ENCODE measurements at regions of chr1 and their contacts with region 1.

Region 1: GRCh38 chr1:38474738-38475623 is 384.6 kb downstream of the RRAGC start:
- DNase-seq: peak; percentile 88
- ATAC-seq: peak; percentile 80
- H3K4me3 ChIP-seq: peak overlapping the region; percentile 51 to 74 (median 62)
- H3K4me3 Mint-ChIP-seq: peak overlapping the region; percentile 94
- H3K27ac ChIP-seq: peak overlapping the region; percentile 90 to 96
- H3K27ac Mint-ChIP-seq: peak overlapping the region; percentile 99
- H3K4me1 ChIP-seq: peaks cover 34 to 49% of the 10 kb centered on the region in 2 donors
- H3K4me1 Mint-ChIP-seq: peaks cover 69% of the 10 kb centered on the region
- H3K27me3 ChIP-seq: no peaks in the 10 kb centered on the region
- H3K27me3 Mint-ChIP-seq: no peaks in the 10 kb centered on the region
- CTCF ChIP-seq: no peak

Region 2: GRCh38 chr1:37474046-37474759 is 1000.8 kb before region 1 on chr1 and contains the start of gene ZC3H12A:
- CTCF ChIA-PET with region 1: no interaction called
- POLR2A ChIA-PET with region 1: no interaction called
- intact Hi-C with region 1: loop called (anchors 10 kb)
- DNase-seq: peak; percentile 96
- ATAC-seq: peak; percentile 69
- H3K4me3 ChIP-seq: peak within 1 kb of the TSS; percentile 94 to 99 (median 98)
- H3K4me3 Mint-ChIP-seq: peak within 1 kb of the TSS; percentile 100
- H3K27ac ChIP-seq: peak within 1 kb of the TSS; percentile 96 to 97
- H3K27ac Mint-ChIP-seq: peak within 1 kb of the TSS; percentile 98
- H3K4me1 ChIP-seq: peaks cover 23 to 50% of the 10 kb centered on the region in 2 donors
- H3K4me1 Mint-ChIP-seq: peaks cover 51% of the 10 kb centered on the region
- H3K27me3 ChIP-seq: peaks cover 0 to 6% (median 0%) of the 10 kb centered on the region in 4 experiments
- H3K27me3 Mint-ChIP-seq: peaks cover 7% of the 10 kb centered on the region
- CTCF ChIP-seq: no peak
- total RNA-seq, gene ZC3H12A: 67.9 and 73.0 TPM in 2 replicates

Region 3: DNA sequence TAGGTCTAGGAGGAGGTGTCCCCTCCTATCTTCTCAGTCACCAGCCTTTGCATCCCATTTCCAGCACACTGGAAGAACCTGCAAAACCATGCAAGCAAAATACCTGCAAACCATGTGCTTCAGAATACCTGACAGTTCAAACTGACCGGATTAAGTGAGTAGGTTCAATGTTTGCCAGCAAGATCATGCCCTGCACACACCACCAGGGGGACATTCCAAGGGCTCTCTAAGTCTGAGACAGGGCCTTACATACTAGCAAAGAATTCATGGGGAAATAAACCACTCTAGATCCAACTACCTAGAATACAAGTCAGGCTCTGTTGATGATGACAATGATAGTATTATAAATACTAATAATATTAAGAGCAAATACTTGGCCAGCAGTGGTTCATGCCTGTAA is 555.7 kb before region 1 on chr1:
- CTCF ChIA-PET with region 1: no interaction called
- POLR2A ChIA-PET with region 1: no interaction called
- intact Hi-C with region 1: loop called (anchors 10 kb)
- DNase-seq: peak; percentile 23
- ATAC-seq: no peak
- H3K4me3 ChIP-seq: no peak overlapping the region
- H3K4me3 Mint-ChIP-seq: no peak overlapping the region
- H3K27ac ChIP-seq: no peak overlapping the region
- H3K27ac Mint-ChIP-seq: no peak overlapping the region
- H3K4me1 ChIP-seq: peaks cover 55 to 56% of the 10 kb centered on the region in 2 donors
- H3K4me1 Mint-ChIP-seq: peaks cover 45% of the 10 kb centered on the region
- H3K27me3 ChIP-seq: no peaks in the 10 kb centered on the region
- H3K27me3 Mint-ChIP-seq: no peaks in the 10 kb centered on the region
- CTCF ChIP-seq: peak; percentile 53

Region 4: DNA sequence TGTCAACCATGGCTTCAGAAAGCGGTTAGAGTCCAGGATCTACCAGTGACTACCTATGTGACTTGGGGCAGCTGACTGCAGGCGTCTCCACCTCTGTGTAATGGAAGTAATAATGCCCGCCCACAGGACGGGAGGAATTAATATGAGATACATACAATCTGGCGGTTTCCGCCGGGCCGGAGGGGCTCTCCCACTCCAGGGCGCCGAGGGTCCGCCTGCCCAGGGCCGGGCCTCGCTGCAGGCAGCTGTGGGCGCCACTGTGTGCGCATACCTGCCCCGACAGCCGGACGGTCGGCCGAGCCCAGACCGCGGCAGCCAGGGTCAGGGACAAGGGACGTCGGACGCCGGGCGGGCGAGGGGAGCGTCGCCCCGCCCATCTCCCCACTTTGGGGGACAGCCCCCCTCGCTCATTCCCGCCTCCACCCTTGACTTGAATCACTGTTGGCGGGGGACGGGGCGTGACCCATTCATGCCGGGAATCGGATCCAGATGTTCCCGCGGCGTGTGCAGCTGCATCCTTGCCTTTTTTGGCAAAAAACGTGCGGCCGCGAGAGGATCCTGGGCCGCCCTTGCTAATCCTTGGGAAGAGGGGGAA is 479.1 kb before region 1 on chr1:
- CTCF ChIA-PET with region 1: no interaction called
- POLR2A ChIA-PET with region 1: no interaction called
- intact Hi-C with region 1: loop called (anchors 10 kb)
- DNase-seq: no peak
- ATAC-seq: peak; percentile 63
- H3K4me3 ChIP-seq: peak overlapping the region in 4 of 5 experiments; percentile 52 to 74 (median 57)
- H3K4me3 Mint-ChIP-seq: peak overlapping the region; percentile 84
- H3K27ac ChIP-seq: peak overlapping the region in 1 of 2 donors; percentile 59
- H3K27ac Mint-ChIP-seq: peak overlapping the region; percentile 26
- H3K4me1 ChIP-seq: peaks cover 9 to 15% of the 10 kb centered on the region in 2 donors
- H3K4me1 Mint-ChIP-seq: peaks cover 15% of the 10 kb centered on the region
- H3K27me3 ChIP-seq: no peaks in the 10 kb centered on the region
- H3K27me3 Mint-ChIP-seq: no peaks in the 10 kb centered on the region
- CTCF ChIP-seq: no peak

Region 5: DNA sequence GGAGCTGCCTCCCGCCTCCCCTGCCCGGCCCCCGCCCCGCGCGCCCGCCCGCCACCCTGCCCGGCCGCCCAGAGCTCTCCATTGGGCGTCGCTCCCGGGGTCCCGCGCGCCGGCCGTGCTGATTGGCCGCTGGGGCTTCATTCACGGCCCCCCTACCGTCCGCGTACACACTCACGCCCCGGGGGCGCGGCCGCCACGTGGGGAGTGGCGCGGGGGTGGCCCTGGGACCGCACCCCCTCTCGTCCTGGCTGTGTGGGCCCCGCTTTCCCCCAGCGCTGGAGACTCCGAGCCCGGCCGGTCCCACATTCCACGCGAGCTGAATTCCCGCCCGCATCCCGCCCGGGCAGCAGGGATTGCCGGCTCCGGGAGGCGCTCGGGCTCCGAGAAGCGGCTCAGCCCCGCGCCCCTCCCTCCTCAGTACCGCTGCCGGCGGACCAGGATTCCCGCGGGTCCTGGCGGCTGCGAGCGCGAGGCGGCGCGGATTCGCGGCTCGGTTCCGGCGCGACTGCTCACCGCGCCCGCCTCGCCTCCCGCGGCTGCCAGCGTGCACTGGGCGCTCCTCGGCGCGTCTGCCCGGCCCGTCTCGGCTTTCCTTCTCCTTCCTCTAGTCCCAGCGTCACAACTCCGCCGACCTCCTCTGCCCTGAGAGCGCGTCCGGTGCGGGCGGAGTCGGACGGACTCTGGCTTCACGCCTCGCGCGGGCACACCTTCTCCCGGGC is 427.9 kb before region 1 on chr1:
- CTCF ChIA-PET with region 1: interaction called, 3 read pairs
- POLR2A ChIA-PET with region 1: interaction called, 5 read pairs
- intact Hi-C with region 1: loop called (anchors 5 kb)
- DNase-seq: peak; percentile 86
- ATAC-seq: peak; percentile 89
- H3K4me3 ChIP-seq: peak overlapping the region in 4 of 5 experiments; percentile 43 to 68 (median 60)
- H3K4me3 Mint-ChIP-seq: peak overlapping the region; percentile 90
- H3K27ac ChIP-seq: no peak overlapping the region
- H3K27ac Mint-ChIP-seq: peak overlapping the region; percentile 53
- H3K4me1 ChIP-seq: peaks cover 24% of the 10 kb centered on the region in 2 donors
- H3K4me1 Mint-ChIP-seq: peaks cover 22% of the 10 kb centered on the region
- H3K27me3 ChIP-seq: peaks cover 0 to 44% (median 30%) of the 10 kb centered on the region in 4 experiments
- H3K27me3 Mint-ChIP-seq: peaks cover 24% of the 10 kb centered on the region
- CTCF ChIP-seq: no peak

Region 6: GRCh38 chr1:38527373-38527966 is 52.5 kb after region 1 on chr1:
- CTCF ChIA-PET with region 1: interaction called, 3 read pairs
- POLR2A ChIA-PET with region 1: no interaction called
- intact Hi-C with region 1: loop called (anchors 5 kb)
- DNase-seq: peak; percentile 67
- ATAC-seq: peak; percentile 69
- H3K4me3 ChIP-seq: peak overlapping the region in 2 of 5 experiments; percentile 13 to 21
- H3K4me3 Mint-ChIP-seq: peak overlapping the region; percentile 61
- H3K27ac ChIP-seq: no peak overlapping the region
- H3K27ac Mint-ChIP-seq: peak overlapping the region; percentile 72
- H3K4me1 ChIP-seq: peaks cover 9 to 11% of the 10 kb centered on the region in 2 donors
- H3K4me1 Mint-ChIP-seq: peaks cover 14% of the 10 kb centered on the region
- H3K27me3 ChIP-seq: no peaks in the 10 kb centered on the region
- H3K27me3 Mint-ChIP-seq: peaks cover 23% of the 10 kb centered on the region
- CTCF ChIP-seq: no peak

Region 7: DNA sequence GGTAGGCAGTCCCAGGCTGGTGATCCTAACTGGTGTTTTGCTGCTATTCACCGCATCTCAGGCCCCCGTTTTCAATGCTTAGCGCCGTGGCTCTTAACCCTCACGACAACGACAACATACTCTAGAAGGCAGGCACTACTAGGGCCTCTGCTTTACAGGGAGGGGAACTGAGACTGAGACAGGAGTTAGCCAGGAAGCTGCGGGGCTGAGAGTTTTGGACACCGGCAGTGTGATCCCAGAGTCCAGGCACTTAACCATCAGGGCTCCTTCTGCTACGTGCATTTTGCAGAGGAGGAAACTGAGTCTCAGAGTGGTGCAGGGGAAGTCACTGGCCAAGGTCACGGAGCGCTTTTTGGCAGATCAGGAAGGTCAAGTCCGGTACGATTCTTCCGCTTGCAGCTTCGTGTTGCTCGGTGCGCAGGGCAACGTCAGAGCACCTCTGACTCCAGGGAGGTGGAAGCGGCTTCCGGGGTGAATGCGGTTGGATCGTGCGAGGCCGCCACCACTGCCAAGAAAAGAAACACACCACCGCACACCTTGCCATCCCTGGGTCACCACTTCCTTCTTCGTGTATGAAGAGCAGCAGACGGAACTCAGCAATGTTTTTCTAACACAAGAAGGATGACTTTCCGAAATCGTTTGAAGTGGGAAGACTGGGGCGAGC is 84.3 kb after region 1 on chr1:
- CTCF ChIA-PET with region 1: interaction called, 10 read pairs
- POLR2A ChIA-PET with region 1: interaction called, 27 read pairs
- intact Hi-C with region 1: loop called (anchors 1 kb)
- DNase-seq: peak; percentile 88
- ATAC-seq: peak; percentile 84
- H3K4me3 ChIP-seq: peak overlapping the region; percentile 19 to 58 (median 41)
- H3K4me3 Mint-ChIP-seq: peak overlapping the region; percentile 92
- H3K27ac ChIP-seq: peak overlapping the region; percentile 58 to 76
- H3K27ac Mint-ChIP-seq: peak overlapping the region; percentile 95
- H3K4me1 ChIP-seq: peaks cover 21 to 37% of the 10 kb centered on the region in 2 donors
- H3K4me1 Mint-ChIP-seq: peaks cover 53% of the 10 kb centered on the region
- H3K27me3 ChIP-seq: no peaks in the 10 kb centered on the region
- H3K27me3 Mint-ChIP-seq: no peaks in the 10 kb centered on the region
- CTCF ChIP-seq: no peak